ENCODE measurements at regions of chr12 and their contacts with region 1.

Region 1: DNA sequence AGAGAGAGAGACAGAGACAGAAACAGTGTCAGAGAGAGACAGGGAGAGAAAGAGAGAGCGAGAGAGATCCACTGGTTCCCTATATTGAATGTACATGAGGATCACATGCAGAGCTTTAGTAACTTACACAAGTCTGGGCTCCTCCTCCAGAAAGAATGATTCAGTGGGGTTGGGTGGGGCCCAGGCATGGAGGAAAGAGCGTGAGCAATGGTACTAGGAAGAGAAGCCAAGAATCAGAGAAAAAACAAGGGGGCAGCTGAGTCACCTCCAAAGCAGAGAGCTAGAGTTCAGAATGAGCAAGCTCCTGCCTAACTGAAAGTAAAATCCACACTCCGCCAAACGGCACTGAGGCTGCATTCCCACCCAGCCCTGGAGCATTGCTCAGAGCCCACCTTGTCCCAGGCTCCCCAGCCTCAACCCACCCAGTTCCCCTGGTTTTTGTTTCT is 670.1 kb upstream of the TBX3 start:
- DNase-seq: peak in 1 of 2 experiments; percentile 66
- H3K4me3 ChIP-seq: peak overlapping the region; percentile 49
- H3K27ac ChIP-seq: peak overlapping the region; percentile 78
- H3K4me1 ChIP-seq: peaks cover 7% of the 10 kb centered on the region; the same call in 1 of the 2 replicates
- H3K27me3 ChIP-seq: no peaks in the 10 kb centered on the region
- CTCF ChIP-seq: no peak

Region 2: GRCh38 chr12:115251727-115252126 is 102.3 kb before region 1 on chr12:
- CTCF ChIA-PET with region 1: no interaction called
- POLR2A ChIA-PET with region 1: interaction called, 31 read pairs
- intact Hi-C with region 1: no loop called
- DNase-seq: no peak
- H3K4me3 ChIP-seq: no peak overlapping the region
- H3K27ac ChIP-seq: no peak overlapping the region
- H3K4me1 ChIP-seq: no peaks in the 10 kb centered on the region
- H3K27me3 ChIP-seq: no peaks in the 10 kb centered on the region
- CTCF ChIP-seq: no peak